Endothelial cell of umbilical vein (primary cell): ENCODE measurements at regions of chr6 and their contacts with region 1.

Region 1: GRCh38 chr6:15922510-15923250 is 206.2 kb upstream of the MYLIP start:
- DNase-seq: peak; percentile 99
- H3K4me3 ChIP-seq: no peak overlapping the region
- H3K27ac ChIP-seq: peak overlapping the region; percentile 86
- H3K4me1 ChIP-seq: peaks cover 23% of the 10 kb centered on the region
- H3K27me3 ChIP-seq: no peaks in the 10 kb centered on the region
- CTCF ChIP-seq: no peak
- POLR2A ChIP-seq: peak; percentile 76

Region 2: GRCh38 chr6:15602154-15602553 is 320.5 kb before region 1 on chr6:
- CTCF ChIA-PET with region 1: no interaction called
- POLR2A ChIA-PET with region 1: no interaction called
- dilution Hi-C with region 1: no loop called
- intact Hi-C with region 1: no loop called
- DNase-seq: no peak
- H3K4me3 ChIP-seq: no peak overlapping the region
- H3K27ac ChIP-seq: no peak overlapping the region
- H3K4me1 ChIP-seq: no peaks in the 10 kb centered on the region
- H3K27me3 ChIP-seq: no peaks in the 10 kb centered on the region
- CTCF ChIP-seq: no peak
- POLR2A ChIP-seq: no peak

Region 3: DNA sequence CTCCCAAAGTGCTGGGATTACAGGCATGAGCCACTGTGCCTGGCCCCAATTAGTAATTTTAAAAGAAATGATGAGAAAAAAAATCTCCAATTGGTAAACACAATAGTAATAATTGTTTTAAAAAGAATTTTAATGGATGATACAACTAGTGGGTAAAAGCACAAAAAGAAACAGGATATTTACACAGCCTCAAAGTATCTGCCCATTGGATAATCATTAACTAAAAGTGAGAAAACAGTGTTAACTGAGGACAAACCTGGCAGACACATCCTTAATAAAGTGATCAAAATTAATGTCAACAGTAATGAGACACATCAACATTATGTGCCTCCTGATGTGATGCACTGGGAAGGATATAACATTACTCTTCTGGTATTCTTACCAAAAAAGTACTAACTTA is 284.3 kb before region 1 on chr6:
- CTCF ChIA-PET with region 1: no interaction called
- POLR2A ChIA-PET with region 1: no interaction called
- dilution Hi-C with region 1: no loop called
- intact Hi-C with region 1: no loop called
- DNase-seq: no peak
- H3K4me3 ChIP-seq: no peak overlapping the region
- H3K27ac ChIP-seq: no peak overlapping the region
- H3K4me1 ChIP-seq: no peaks in the 10 kb centered on the region
- H3K27me3 ChIP-seq: no peaks in the 10 kb centered on the region
- CTCF ChIP-seq: no peak
- POLR2A ChIP-seq: no peak

Region 4: DNA sequence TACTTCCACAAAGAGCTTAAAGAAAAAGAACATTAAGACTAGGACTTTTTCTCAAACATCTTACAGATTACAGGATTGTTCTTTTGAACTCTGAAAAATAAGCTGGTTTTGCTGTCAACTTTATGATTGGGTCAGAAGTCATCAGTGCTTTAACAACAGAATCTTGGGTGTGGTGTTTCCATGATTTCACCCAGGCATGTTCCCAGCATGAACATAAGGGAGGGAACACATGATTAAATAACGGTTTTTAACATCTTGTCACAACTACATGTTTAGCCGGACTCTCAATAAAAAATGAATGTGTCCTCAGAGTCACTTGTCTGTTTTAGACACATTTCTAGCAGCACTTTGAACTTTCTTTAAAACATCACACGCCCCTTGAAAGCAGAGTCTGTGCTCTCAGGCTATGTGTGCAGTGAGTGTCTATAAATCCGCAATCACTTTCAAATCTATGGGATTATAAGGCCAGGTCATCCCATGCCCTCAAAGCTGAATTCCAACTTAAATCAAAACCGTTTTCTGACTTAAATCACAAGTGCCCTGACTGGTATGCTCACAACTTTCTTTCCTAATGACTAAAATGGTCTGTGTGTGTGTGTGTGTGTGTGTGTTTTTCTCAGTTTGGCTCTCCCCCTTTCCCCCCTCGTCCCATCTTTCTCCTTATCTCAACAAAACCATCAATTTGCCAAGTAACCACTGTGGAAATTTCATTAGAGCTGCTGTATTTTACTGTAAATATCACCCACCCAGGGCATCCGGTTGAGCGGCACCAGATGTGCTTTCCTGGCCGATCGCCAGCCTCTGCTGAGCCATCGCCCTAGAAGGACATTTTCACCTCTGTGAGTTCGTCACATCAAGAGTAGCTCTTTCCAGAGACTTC is 43.1 kb before region 1 on chr6:
- CTCF ChIA-PET with region 1: interaction called, 4 read pairs
- POLR2A ChIA-PET with region 1: no interaction called
- dilution Hi-C with region 1: no loop called
- intact Hi-C with region 1: loop called (anchors 1 kb)
- DNase-seq: peak; percentile 87
- H3K4me3 ChIP-seq: no peak overlapping the region
- H3K27ac ChIP-seq: no peak overlapping the region
- H3K4me1 ChIP-seq: peaks cover 21% of the 10 kb centered on the region
- H3K27me3 ChIP-seq: no peaks in the 10 kb centered on the region
- CTCF ChIP-seq: no peak
- POLR2A ChIP-seq: no peak

Region 5: DNA sequence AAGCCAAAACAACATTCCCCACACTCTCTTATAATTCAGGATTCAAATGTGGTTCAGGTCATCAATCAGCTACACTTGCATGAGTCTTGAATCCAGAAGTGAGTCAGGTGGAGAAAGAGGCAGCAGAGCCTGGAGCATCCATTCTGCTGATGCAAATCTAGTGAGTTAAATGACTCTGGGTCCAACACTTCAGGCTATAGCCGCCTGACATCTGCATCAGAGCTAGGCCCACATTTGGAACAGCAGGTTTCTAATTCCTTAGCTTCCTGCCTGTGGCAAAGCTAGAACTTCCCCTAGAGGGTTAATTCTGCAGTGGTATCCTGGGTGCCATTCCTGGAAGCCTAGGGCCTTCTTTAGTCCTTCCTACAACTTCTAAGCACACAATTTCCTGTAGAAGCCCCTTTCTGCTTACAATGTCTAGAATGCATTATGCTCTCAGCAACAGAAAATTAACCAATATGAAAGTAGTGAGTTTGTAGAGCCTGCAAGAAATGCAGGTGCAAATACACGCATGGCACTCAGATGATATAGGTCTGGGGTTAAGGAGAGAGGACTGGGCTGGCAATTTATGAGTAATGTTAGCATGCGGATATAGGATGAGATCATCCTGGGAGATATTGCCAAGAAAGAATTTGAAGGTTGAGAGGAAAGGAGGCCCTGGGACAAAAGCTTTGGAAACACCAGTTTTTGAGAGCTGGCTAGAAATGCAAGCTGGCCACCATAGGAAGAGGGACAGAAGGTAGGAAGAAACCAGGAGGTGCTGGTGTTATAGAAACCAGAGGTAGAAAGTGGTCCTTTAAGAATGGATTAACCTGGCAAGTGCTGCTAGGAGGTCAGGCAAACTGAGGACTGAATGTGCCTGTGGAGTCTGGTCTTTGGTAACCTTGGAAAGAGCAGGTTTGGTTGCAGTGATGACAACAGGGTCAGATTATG is 22.8 kb after region 1 on chr6:
- CTCF ChIA-PET with region 1: interaction called, 3 read pairs
- POLR2A ChIA-PET with region 1: no interaction called
- dilution Hi-C with region 1: no loop called
- intact Hi-C with region 1: loop called (anchors 1 kb)
- DNase-seq: peak; percentile 78
- H3K4me3 ChIP-seq: no peak overlapping the region
- H3K27ac ChIP-seq: peak overlapping the region; percentile 3
- H3K4me1 ChIP-seq: peaks cover 31% of the 10 kb centered on the region
- H3K27me3 ChIP-seq: no peaks in the 10 kb centered on the region
- CTCF ChIP-seq: no peak
- POLR2A ChIP-seq: no peak

Region 6: GRCh38 chr6:15962449-15962764 is 39.7 kb after region 1 on chr6:
- CTCF ChIA-PET with region 1: no interaction called
- POLR2A ChIA-PET with region 1: interaction called, 7 read pairs
- dilution Hi-C with region 1: no loop called
- intact Hi-C with region 1: loop called (anchors 1 kb)
- DNase-seq: peak; percentile 92
- H3K4me3 ChIP-seq: no peak overlapping the region
- H3K27ac ChIP-seq: peak overlapping the region; percentile 91
- H3K4me1 ChIP-seq: peaks cover 20% of the 10 kb centered on the region
- H3K27me3 ChIP-seq: no peaks in the 10 kb centered on the region
- CTCF ChIP-seq: no peak
- POLR2A ChIP-seq: peak; percentile 58

Region 7: DNA sequence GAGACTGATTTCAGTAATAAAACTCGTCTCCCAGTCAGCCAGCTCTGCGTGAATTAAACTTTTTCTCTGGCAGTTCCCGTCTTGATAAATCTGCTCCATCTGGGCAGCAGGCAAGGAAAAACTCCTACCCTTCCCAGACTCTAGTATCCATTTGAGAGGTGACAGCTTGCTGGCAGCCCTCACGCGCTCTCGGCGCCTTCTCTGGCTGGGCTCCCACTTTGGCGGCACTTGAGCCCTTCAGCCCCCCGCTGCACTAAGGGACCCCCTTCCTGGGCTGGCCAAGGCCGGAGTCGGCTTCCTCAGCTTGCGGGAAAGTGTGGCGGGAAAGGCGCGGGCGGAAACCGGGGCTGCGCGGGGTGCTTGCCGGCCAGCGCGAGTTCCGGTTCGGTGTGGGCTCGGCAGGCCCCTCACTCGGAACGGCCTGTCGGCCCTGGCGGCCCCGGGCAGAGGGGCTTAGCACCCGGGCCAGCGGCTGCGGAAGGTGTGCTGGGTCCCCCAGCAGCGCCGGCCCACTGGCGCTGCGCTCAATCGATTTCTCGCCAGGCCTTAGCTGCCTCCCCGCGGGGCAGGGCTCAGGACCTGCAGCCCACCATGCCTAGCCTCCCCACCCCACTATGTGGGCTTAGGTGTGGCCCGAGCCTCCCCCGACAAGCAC is 293.9 kb after region 1 on chr6:
- CTCF ChIA-PET with region 1: no interaction called
- POLR2A ChIA-PET with region 1: no interaction called
- dilution Hi-C with region 1: no loop called
- intact Hi-C with region 1: loop called (anchors 1 kb)
- DNase-seq: peak; percentile 41
- H3K4me3 ChIP-seq: no peak overlapping the region
- H3K27ac ChIP-seq: peak overlapping the region; percentile 99
- H3K4me1 ChIP-seq: peaks cover 28% of the 10 kb centered on the region
- H3K27me3 ChIP-seq: no peaks in the 10 kb centered on the region
- CTCF ChIP-seq: no peak
- POLR2A ChIP-seq: no peak

Region 8: DNA sequence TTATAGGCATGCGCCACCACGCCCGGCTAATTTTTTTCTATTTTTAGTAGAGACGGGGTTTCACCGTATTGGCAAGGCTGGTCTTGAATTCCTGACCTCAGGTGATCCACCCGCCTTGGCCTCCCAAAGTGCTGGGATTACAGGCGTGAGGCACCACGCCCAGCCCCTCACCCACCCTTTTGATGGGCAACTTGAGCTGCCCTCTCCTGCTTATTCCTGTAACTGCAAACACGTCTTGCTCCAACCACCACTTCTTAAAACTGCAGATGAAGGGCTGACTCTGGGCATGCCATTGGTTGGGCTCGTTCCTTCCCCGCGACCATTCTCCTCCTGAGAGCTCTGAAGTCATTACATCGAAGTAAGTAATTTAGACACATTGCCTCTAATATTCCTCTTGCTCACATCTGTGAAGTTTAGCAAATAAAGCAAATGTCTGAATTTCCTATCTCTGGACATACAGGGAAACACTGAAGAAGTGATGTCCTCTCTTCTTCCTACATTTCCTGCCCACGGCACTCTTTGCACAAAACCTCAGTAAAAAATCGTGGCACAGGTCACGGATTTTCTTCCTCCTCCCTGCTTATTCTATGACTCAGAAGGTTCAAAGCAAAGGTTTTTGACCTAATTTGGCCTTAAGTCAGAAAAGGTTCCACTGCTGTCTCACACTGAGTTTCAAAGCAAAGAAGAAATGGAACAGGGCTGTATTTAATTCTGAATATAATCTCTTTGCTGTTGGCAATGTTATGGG is 433.2 kb after region 1 on chr6:
- CTCF ChIA-PET with region 1: no interaction called
- POLR2A ChIA-PET with region 1: no interaction called
- dilution Hi-C with region 1: no loop called
- intact Hi-C with region 1: no loop called
- DNase-seq: peak; percentile 40
- H3K4me3 ChIP-seq: no peak overlapping the region
- H3K27ac ChIP-seq: no peak overlapping the region
- H3K4me1 ChIP-seq: peaks cover 24% of the 10 kb centered on the region
- H3K27me3 ChIP-seq: no peaks in the 10 kb centered on the region
- CTCF ChIP-seq: no peak
- POLR2A ChIP-seq: no peak